Activated CD4-positive, alpha-beta T cell treated with anti-CD3 and anti-CD28 coated beads for 36 hours (primary cell): ENCODE measurements at regions of chr17 and their contacts with region 1.

Region 1: DNA sequence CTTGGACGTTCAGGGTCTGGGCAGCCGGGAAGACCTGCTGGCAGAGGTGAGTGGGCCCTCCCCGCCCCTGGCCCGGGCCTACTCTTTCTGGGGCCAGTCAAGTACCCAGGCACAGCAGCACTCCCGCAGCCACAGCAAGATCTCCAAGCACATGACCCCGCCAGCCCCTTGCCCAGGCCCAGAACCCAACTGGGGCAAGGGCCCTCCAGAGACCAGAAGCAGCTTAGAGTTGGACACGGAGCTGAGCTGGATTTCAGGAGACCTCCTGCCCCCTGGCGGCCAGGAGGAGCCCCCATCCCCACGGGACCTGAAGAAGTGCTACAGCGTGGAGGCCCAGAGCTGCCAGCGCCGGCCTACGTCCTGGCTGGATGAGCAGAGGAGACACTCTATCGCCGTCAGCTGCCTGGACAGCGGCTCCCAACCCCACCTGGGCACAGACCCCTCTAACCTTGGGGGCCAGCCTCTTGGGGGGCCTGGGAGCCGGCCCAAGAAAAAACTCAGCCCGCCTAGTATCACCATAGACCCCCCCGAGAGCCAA is 8.6 kb upstream of the ABCC3 start:
- DNase-seq: peak; percentile 83
- ATAC-seq: peak; percentile 88
- H3K4me3 Mint-ChIP-seq: no peak overlapping the region
- H3K27ac Mint-ChIP-seq: no peak overlapping the region
- H3K4me1 Mint-ChIP-seq: no peaks in the 10 kb centered on the region
- H3K27me3 Mint-ChIP-seq: peaks cover 21% of the 10 kb centered on the region

Region 2: GRCh38 chr17:50541716-50542688 is 84.1 kb before region 1 on chr17:
- CTCF ChIA-PET with region 1: interaction called, 22 read pairs
- POLR2A ChIA-PET with region 1: no interaction called
- intact Hi-C with region 1: loop called (anchors 1 kb)
- DNase-seq: peak; percentile 91
- ATAC-seq: peak; percentile 87
- H3K4me3 Mint-ChIP-seq: peak overlapping the region; percentile 72
- H3K27ac Mint-ChIP-seq: peak overlapping the region; percentile 82
- H3K4me1 Mint-ChIP-seq: peaks cover 11% of the 10 kb centered on the region
- H3K27me3 Mint-ChIP-seq: peaks cover 7% of the 10 kb centered on the region

Region 3: DNA sequence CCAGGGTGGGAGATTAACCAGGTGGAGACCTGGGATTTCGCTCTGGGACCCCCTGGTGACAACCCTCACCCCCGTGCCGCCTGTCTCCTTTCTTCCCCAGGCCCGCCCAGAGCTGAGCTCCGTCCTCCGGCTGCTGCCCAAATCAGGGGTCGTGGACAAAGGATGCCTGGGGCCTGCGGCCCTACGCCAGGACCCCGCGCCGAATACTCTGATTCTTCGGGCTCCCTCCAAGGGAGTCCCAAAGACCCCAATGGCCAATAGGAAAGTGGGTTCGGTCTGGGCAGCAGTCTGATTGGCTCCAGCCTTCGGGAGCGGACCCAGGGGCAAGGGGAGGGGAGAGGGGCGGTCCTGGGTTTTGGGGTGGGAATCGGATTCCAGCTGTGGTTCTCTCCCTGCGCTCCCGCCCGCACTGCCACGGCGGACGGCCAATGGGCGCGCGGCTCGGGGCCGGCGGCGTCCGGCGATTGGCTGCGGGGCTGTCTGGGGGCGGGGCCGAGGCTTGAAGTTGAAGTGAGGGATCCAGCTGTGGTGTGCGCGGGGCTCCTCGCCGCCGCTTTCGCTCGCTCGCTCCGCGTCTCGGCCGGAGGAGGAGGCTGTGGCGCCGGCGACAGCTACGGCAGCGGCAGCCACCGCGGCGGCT is 65.8 kb before region 1 on chr17 and contains the start of gene CACNA1G:
- CTCF ChIA-PET with region 1: interaction called, 9 read pairs
- POLR2A ChIA-PET with region 1: no interaction called
- intact Hi-C with region 1: loop called in 1 of 2 experiments (anchors 5 kb)
- DNase-seq: peak; percentile 93
- ATAC-seq: peak; percentile 94
- H3K4me3 Mint-ChIP-seq: peak within 1 kb of the TSS; percentile 55
- H3K27ac Mint-ChIP-seq: no peak within 1 kb of the TSS
- H3K4me1 Mint-ChIP-seq: peaks cover 21% of the 10 kb centered on the region
- H3K27me3 Mint-ChIP-seq: peaks cover 51% of the 10 kb centered on the region
- total RNA-seq, gene CACNA1G: not detected

Region 4: DNA sequence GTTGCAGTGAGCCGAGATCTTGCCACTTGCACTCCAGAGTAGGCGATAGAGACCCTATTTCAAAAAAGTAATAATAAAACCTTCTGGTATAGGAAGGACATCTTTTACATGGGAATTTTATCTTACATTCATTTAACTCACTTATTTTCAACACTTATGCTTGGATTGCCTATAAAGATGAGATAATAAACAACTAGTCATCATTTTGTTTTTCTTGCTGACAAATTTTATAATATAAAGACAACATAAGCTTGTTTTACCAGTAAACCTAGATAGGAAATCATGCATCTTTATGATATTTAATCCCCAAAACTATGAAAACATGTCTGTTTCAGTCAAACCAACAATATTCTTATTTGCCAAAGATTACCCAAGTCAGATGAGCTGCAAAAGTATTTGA is 25.6 kb after region 1 on chr17:
- CTCF ChIA-PET with region 1: interaction called, 10 read pairs
- POLR2A ChIA-PET with region 1: no interaction called
- intact Hi-C with region 1: no loop called
- DNase-seq: no peak
- ATAC-seq: no peak
- H3K4me3 Mint-ChIP-seq: no peak overlapping the region
- H3K27ac Mint-ChIP-seq: no peak overlapping the region
- H3K4me1 Mint-ChIP-seq: no peaks in the 10 kb centered on the region
- H3K27me3 Mint-ChIP-seq: peaks cover 4% of the 10 kb centered on the region

Region 5: DNA sequence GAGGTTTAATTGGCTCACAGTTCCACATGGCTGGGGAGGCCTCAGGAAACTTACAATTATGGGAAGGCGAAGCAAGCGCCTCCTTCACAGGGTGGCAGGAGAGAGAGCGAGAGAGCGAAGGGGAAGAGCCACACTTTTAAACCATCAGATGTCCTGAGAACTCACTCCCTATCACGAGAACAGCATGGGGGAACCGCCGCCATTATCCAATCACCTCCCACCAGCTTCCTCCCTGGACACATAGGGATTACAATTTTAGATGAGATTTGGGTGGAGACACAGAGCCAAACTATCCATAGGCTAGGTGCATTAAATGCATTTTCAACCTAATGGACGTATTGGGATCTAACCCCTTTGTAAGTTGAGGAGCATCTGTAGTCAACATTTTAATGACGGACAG is 86.5 kb after region 1 on chr17:
- CTCF ChIA-PET with region 1: no interaction called
- POLR2A ChIA-PET with region 1: no interaction called
- intact Hi-C with region 1: no loop called
- DNase-seq: no peak
- ATAC-seq: no peak
- H3K4me3 Mint-ChIP-seq: no peak overlapping the region
- H3K27ac Mint-ChIP-seq: no peak overlapping the region
- H3K4me1 Mint-ChIP-seq: peaks cover 19% of the 10 kb centered on the region
- H3K27me3 Mint-ChIP-seq: no peaks in the 10 kb centered on the region

Region 6: DNA sequence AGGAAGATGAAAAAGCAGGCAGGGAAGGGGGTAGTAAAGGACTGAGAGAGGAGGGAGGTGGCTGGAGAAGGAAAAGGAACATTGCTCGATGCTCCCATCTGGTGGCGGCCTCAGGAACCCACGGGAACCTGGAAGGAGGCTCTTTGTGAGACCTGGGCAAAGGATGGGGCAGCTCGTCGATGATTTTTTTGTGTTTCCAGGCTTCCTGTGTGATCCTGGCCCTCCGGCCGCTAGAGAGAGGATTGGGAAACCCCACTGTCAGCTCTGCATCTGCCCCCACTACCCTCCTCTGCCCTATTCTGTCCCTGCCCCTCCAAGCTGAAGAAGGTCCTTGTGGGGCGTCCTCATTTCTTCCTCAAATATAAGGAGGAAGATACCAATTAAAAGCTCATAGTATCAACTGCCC is 215.8 kb after region 1 on chr17:
- CTCF ChIA-PET with region 1: interaction called, 3 read pairs
- POLR2A ChIA-PET with region 1: no interaction called
- intact Hi-C with region 1: loop called in 1 of 2 experiments (anchors 1 kb)
- DNase-seq: peak; percentile 77
- ATAC-seq: peak; percentile 85
- H3K4me3 Mint-ChIP-seq: no peak overlapping the region
- H3K27ac Mint-ChIP-seq: no peak overlapping the region
- H3K4me1 Mint-ChIP-seq: no peaks in the 10 kb centered on the region
- H3K27me3 Mint-ChIP-seq: no peaks in the 10 kb centered on the region